ENCODE measurements at regions of chr22 and their contacts with region 1.

Region 1: DNA sequence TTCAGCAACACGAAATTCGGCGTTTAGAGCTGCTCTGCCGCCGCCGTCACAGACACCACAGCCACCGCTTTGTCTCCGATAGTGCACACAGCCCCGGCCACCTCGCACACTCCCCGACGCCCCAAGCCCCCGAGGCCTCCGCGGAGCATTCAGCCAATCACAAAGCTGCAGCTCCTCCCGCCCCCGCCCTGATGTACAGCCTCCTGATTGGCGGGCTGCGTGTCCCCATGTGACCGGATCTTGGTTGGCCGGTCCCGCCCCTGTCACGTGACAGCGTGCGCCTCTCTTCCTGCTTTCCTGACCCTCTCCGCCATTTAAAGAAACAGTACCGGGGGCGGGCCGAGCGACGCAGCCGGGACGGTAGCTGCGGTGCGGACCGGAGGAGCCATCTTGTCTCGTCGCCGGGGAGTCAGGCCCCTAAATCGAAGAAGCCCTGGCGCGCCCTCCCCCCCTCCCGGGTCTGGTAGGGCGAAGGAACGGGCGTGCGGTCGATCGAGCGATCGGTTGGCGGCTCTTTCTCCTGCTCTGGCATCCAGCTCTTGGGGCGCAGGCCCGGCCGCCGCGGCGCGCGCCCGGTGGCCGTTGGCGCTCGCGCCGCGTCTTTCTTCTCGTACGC is at the start of gene TUG1:
- DNase-seq: peak; percentile 98
- H3K4me3 Mint-ChIP-seq: peak within 1 kb of the TSS; percentile 93
- H3K27ac Mint-ChIP-seq: peak within 1 kb of the TSS; percentile 89
- H3K4me1 Mint-ChIP-seq: peaks cover 56% of the 10 kb centered on the region
- H3K27me3 Mint-ChIP-seq: no peaks in the 10 kb centered on the region
- total RNA-seq, gene TUG1: 42.3 to 44.0 TPM

Region 2: GRCh38 chr22:30940685-30941362 is 28.2 kb before region 1 on chr22:
- CTCF ChIA-PET with region 1: interaction called, 3 read pairs
- intact Hi-C with region 1: loop called (anchors 1 kb)
- DNase-seq: peak; percentile 73
- H3K4me3 Mint-ChIP-seq: peak overlapping the region; percentile 46
- H3K27ac Mint-ChIP-seq: peak overlapping the region; percentile 73
- H3K4me1 Mint-ChIP-seq: peaks cover 77% of the 10 kb centered on the region
- H3K27me3 Mint-ChIP-seq: no peaks in the 10 kb centered on the region

Region 3: DNA sequence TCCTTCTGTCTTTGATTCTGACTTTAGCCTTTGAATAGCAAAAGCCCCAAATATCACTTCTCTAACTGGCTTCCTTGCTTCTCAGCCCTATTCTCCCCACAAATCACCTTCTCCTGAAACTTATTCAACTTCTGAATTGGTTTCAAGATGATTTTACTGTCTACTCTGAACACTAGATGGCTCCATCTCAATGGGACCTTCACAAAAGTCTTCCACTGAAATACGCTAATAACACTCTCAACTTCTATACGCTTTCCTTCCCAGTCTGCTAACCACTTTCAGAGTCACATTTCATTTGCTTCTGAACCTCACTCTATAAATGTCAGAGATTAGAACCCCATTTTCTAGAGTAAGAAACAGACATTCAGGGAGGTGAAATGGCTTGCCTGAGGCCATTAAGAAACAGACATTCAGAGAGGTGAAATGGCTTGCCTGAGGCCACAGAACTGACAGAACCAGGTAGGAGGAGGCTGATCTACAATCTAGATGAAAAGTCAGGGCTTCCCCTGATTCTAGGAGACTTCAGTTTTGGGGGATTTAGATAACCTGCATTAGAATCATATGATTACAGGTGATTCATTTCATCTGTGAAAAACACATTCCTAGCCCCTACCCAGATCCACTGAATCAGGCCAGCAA is 21.1 kb before region 1 on chr22:
- CTCF ChIA-PET with region 1: interaction called, 6 read pairs
- intact Hi-C with region 1: loop called (anchors 2 kb)
- DNase-seq: no peak
- H3K4me3 Mint-ChIP-seq: no peak overlapping the region
- H3K27ac Mint-ChIP-seq: no peak overlapping the region
- H3K4me1 Mint-ChIP-seq: peaks cover 60% of the 10 kb centered on the region
- H3K27me3 Mint-ChIP-seq: no peaks in the 10 kb centered on the region

Region 4: DNA sequence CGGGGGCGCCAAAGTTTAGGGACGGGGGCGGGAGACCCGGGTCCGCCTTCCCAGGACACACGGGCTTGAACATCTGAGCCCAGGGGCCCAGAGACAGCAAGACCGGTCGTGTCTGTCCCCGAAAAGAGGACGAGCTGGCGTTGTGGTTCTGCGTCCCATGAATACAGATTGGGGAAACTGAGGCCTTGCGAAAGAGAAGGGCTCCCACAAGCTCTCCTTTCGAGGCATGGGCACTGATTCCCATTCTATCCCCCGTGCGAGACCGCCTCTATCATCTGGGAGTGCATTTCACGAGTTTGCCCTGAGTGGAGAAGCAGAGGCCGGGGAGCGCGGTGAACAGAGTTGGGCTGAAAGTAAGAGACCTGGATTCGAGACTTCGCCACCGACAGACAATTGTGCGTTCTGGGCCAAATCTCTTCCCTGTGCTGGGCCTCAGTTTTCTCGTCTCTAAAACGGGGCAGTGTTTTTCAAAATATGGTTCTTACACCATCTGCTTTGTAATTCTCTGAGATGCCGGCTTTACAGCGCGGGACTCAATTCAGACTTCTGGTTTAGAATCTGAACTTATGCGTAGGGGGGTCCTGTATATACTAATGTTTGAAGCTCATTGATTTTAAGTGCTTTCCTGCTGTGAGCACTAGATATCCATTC is 191.4 kb after region 1 on chr22:
- CTCF ChIA-PET with region 1: no interaction called
- intact Hi-C with region 1: loop called (anchors 1 kb)
- DNase-seq: peak; percentile 28
- H3K4me3 Mint-ChIP-seq: peak overlapping the region; percentile 100
- H3K27ac Mint-ChIP-seq: peak overlapping the region; percentile 96
- H3K4me1 Mint-ChIP-seq: peaks cover 33% of the 10 kb centered on the region
- H3K27me3 Mint-ChIP-seq: no peaks in the 10 kb centered on the region

Measured in activated naive CD4-positive, alpha-beta T cell treated with anti-CD3 and anti-CD28 coated beads for 36 hours (primary cell).